Panc1 (cell line): ENCODE measurements at regions of chr10 and their contacts with region 1.

Region 1: GRCh38 chr10:101974091-101974971 is 81.6 kb downstream of the ARMH3 start:
- DNase-seq: no peak
- ATAC-seq: no peak
- H3K4me3 ChIP-seq: no peak overlapping the region
- H3K27ac ChIP-seq: no peak overlapping the region
- H3K4me1 ChIP-seq: no peaks in the 10 kb centered on the region
- H3K27me3 ChIP-seq: no peaks in the 10 kb centered on the region
- CTCF ChIP-seq: no peak

Region 2: GRCh38 chr10:100303724-100304319 is 1670.5 kb before region 1 on chr10:
- CTCF ChIA-PET with region 1: no interaction called
- POLR2A ChIA-PET with region 1: no interaction called
- in situ Hi-C with region 1: no loop called
- intact Hi-C with region 1: no loop called
- DNase-seq: peak; percentile 41
- ATAC-seq: peak; percentile 89
- H3K4me3 ChIP-seq: no peak overlapping the region
- H3K27ac ChIP-seq: no peak overlapping the region
- H3K4me1 ChIP-seq: no peaks in the 10 kb centered on the region
- H3K27me3 ChIP-seq: peaks cover 8% of the 10 kb centered on the region; the same call in 1 of the 2 replicates
- CTCF ChIP-seq: peak; percentile 86

Region 3: DNA sequence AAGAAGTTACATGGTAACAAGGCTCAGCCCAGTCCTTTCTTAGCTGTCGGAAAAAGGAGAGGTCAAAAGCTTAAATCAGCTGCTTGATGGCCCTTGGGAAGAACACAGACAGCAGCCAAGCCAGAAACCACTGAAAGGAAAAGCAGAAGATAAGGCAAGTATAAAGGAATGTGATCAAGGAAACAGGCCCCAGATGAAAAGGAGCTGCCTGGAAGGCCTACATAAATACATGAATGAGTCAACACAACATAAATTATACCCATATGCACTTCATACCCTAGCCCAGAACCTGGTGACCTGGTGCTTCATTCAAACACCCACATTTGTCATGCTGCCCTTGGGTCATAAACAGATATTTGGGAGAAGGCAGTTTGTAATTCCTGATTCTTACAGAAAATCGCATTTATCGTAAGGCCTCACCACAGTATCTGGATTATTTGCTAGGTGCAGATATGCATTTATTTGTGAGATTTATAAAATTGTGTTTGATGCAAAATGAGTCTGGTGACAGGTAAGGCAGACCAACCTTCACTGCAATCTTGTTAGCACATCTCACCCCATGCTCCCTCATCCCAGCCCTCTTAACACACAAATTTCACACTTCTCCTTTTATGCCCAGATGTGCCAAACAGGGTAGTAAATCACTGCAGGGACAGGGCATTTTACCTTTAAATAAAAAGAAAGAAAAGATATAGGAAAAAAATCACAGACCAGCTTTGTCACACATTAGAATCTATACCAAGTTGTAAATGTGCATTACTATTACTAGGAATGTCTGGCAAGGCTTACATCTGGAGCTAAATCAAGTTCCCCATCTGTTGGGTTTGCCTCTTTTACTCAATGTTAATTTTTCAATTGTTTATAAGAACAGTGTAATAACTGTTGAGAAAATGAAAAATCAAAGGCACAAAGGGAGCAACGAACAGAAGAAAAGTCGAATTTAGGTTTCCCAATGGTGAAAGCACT is 35.7 kb before region 1 on chr10:
- CTCF ChIA-PET with region 1: no interaction called
- POLR2A ChIA-PET with region 1: interaction called, 14 read pairs
- in situ Hi-C with region 1: no loop called
- intact Hi-C with region 1: no loop called
- DNase-seq: peak; percentile 39
- ATAC-seq: no peak; the same call in 1 of the 2 replicates
- H3K4me3 ChIP-seq: no peak overlapping the region
- H3K27ac ChIP-seq: no peak overlapping the region
- H3K4me1 ChIP-seq: no peaks in the 10 kb centered on the region
- H3K27me3 ChIP-seq: no peaks in the 10 kb centered on the region
- CTCF ChIP-seq: no peak

Region 4: GRCh38 chr10:101961591-101962498 is 12.5 kb before region 1 on chr10:
- CTCF ChIA-PET with region 1: no interaction called
- POLR2A ChIA-PET with region 1: no interaction called
- in situ Hi-C with region 1: no loop called
- intact Hi-C with region 1: loop called (anchors 1 kb)
- DNase-seq: no peak
- ATAC-seq: no peak
- H3K4me3 ChIP-seq: no peak overlapping the region
- H3K27ac ChIP-seq: no peak overlapping the region
- H3K4me1 ChIP-seq: no peaks in the 10 kb centered on the region
- H3K27me3 ChIP-seq: no peaks in the 10 kb centered on the region
- CTCF ChIP-seq: no peak

Region 5: GRCh38 chr10:102114861-102115618 is 140.7 kb after region 1 on chr10:
- CTCF ChIA-PET with region 1: no interaction called
- POLR2A ChIA-PET with region 1: no interaction called
- in situ Hi-C with region 1: no loop called
- intact Hi-C with region 1: no loop called
- DNase-seq: no peak
- ATAC-seq: peak; percentile 86
- H3K4me3 ChIP-seq: peak overlapping the region; percentile 74 to 84
- H3K27ac ChIP-seq: peak overlapping the region; percentile 85
- H3K4me1 ChIP-seq: peaks cover 60% of the 10 kb centered on the region
- H3K27me3 ChIP-seq: no peaks in the 10 kb centered on the region
- CTCF ChIP-seq: no peak